Right ventricle myocardium inferior (tissue), 1 donor: ENCODE measurements at regions of chr13 and their contacts with region 1.

Region 1: DNA sequence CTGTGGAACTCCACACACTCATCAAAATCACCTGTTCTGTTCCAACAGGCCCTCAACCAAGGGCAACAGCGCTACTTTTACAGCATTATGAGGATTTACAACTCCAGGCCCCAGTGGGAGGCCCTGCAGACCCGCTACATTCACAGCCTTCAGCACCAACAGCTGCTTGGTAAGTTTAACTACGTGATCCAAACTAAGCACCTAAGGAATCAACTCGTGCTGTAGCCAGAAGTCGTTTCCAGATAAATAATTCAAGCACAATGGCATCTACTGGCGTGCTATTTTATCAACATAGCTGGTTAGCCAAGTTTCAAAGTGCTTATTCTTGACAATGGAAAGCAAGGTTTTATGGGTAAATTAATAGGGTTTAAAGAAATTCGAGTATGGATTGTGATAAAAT is 5.3 kb downstream of the FAM216B start:
- DNase-seq: no peak
- ATAC-seq: peak; percentile 13

Region 2: GRCh38 chr13:42715909-42716308 is 70.8 kb before region 1 on chr13:
- intact Hi-C with region 1: loop called (anchors 10 kb)
- DNase-seq: no peak
- ATAC-seq: peak; percentile 88

Region 3: DNA sequence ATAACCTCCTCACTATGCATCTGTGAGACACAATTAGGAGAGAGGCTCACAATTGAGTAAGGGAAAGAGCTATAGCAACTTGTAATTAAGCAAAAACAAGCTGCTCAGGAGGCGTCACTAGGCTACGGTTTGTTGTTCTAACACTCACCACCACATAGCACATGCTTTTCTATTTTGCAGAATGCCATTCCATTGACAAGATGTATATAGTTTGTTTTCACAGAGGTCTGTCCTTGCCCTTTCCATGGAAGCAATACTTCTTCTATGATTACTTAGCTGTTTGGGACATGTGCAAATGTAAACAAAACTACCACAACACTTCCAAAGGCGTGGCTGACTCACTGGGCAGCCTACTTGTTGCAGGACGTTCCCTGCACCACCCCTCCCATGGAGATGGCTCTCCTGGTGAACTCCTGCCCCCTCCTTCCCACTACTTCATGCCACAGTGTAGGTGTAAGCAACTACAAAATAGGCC is 39.3 kb before region 1 on chr13:
- intact Hi-C with region 1: loop called (anchors 5 kb)
- DNase-seq: no peak
- ATAC-seq: peak; percentile 76

Region 4: GRCh38 chr13:42875475-42876269 is 89.0 kb after region 1 on chr13:
- intact Hi-C with region 1: no loop called
- DNase-seq: no peak
- ATAC-seq: no peak